ENCODE measurements at regions of chr6 and their contacts with region 1.

Region 1: GRCh38 chr6:90179190-90180169 is 117.2 kb downstream of the BACH2 start:
- DNase-seq: peak; percentile 35
- ATAC-seq: no peak
- H3K4me3 ChIP-seq: no peak overlapping the region
- H3K27ac ChIP-seq: no peak overlapping the region
- H3K4me1 ChIP-seq: no peaks in the 10 kb centered on the region
- H3K27me3 ChIP-seq: no peaks in the 10 kb centered on the region
- CTCF ChIP-seq: peak; percentile 71

Region 2: GRCh38 chr6:90121982-90122381 is 57.5 kb before region 1 on chr6:
- CTCF ChIA-PET with region 1: no interaction called
- POLR2A ChIA-PET with region 1: no interaction called
- intact Hi-C with region 1: no loop called
- DNase-seq: peak; percentile 15
- ATAC-seq: no peak
- H3K4me3 ChIP-seq: no peak overlapping the region
- H3K27ac ChIP-seq: no peak overlapping the region
- H3K4me1 ChIP-seq: no peaks in the 10 kb centered on the region
- H3K27me3 ChIP-seq: no peaks in the 10 kb centered on the region
- CTCF ChIP-seq: no peak

Region 3: GRCh38 chr6:90586836-90587638 is 407.6 kb after region 1 on chr6 and contains the start of gene MAP3K7:
- CTCF ChIA-PET with region 1: no interaction called
- POLR2A ChIA-PET with region 1: interaction called, 14 read pairs
- intact Hi-C with region 1: no loop called
- DNase-seq: peak; percentile 95
- ATAC-seq: peak; percentile 89
- H3K4me3 ChIP-seq: peak within 1 kb of the TSS; percentile 98
- H3K27ac ChIP-seq: peak within 1 kb of the TSS; percentile 77
- H3K4me1 ChIP-seq: peaks cover 24% of the 10 kb centered on the region
- H3K27me3 ChIP-seq: no peaks in the 10 kb centered on the region
- CTCF ChIP-seq: no peak
- total RNA-seq, gene MAP3K7: 14.0 and 17.1 TPM in 2 replicates

Measured in PC-3 (cell line).